ENCODE measurements at regions of chr6 and their contacts with region 1.

Region 1: DNA sequence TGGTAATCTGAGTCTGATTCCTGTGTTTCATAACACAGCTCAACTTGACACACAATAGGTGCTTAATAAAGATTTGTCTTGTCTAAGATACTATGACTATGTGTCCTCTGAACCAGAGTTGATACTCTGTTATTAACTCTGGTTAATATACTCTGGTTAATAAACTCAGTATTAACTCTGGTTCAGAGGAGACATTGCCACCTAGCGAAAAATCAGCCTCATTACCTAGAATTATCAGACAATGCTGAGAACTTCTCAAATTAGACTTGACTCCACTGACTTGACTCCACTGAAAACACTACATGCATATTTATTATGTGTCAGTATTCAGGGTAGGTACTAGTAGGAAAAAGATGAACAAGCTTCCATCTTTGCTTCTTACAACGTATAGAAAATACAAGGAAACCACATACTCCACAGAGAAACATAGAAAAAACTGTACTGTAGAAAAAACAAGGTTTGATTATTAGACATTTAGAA is 73.9 kb downstream of the AHI1 start:
- DNase-seq: peak; percentile 4
- H3K4me3 ChIP-seq: no peak overlapping the region
- H3K27me3 ChIP-seq: no peaks in the 10 kb centered on the region
- CTCF ChIP-seq: peak; percentile 68

Region 2: GRCh38 chr6:135145063-135145800 is 278.5 kb before region 1 on chr6:
- CTCF ChIA-PET with region 1: interaction called, 31 read pairs
- POLR2A ChIA-PET with region 1: no interaction called
- DNase-seq: no peak
- H3K4me3 ChIP-seq: no peak overlapping the region
- H3K27me3 ChIP-seq: no peaks in the 10 kb centered on the region
- CTCF ChIP-seq: peak; percentile 53

Measured in BJ (cell line).